MCF 10A (cell line): ENCODE measurements at regions of chr1 and their contacts with region 1.

Region 1: GRCh38 chr1:193406901-193407300 is 220.5 kb upstream of the B3GALT2 start:
- DNase-seq: peak; percentile 75
- H3K4me3 Mint-ChIP-seq: no peak overlapping the region
- H3K27ac Mint-ChIP-seq: peak overlapping the region; percentile 17
- H3K4me1 Mint-ChIP-seq: peaks cover 10% of the 10 kb centered on the region
- H3K27me3 Mint-ChIP-seq: no peaks in the 10 kb centered on the region
- CTCF ChIP-seq: peak; percentile 68

Region 2: GRCh38 chr1:192958871-192959270 is 448.0 kb before region 1 on chr1:
- CTCF ChIA-PET with region 1: no interaction called
- POLR2A ChIA-PET with region 1: no interaction called
- intact Hi-C with region 1: no loop called
- DNase-seq: peak; percentile 30
- H3K4me3 Mint-ChIP-seq: no peak overlapping the region
- H3K27ac Mint-ChIP-seq: no peak overlapping the region
- H3K4me1 Mint-ChIP-seq: no peaks in the 10 kb centered on the region
- H3K27me3 Mint-ChIP-seq: no peaks in the 10 kb centered on the region
- CTCF ChIP-seq: no peak

Region 3: GRCh38 chr1:193183019-193183627 is 223.8 kb before region 1 on chr1:
- CTCF ChIA-PET with region 1: interaction called, 3 read pairs
- POLR2A ChIA-PET with region 1: no interaction called
- intact Hi-C with region 1: loop called (anchors 1 kb)
- DNase-seq: peak; percentile 77
- H3K4me3 Mint-ChIP-seq: no peak overlapping the region
- H3K27ac Mint-ChIP-seq: no peak overlapping the region
- H3K4me1 Mint-ChIP-seq: peaks cover 26% of the 10 kb centered on the region
- H3K27me3 Mint-ChIP-seq: no peaks in the 10 kb centered on the region
- CTCF ChIP-seq: peak; percentile 83

Region 4: DNA sequence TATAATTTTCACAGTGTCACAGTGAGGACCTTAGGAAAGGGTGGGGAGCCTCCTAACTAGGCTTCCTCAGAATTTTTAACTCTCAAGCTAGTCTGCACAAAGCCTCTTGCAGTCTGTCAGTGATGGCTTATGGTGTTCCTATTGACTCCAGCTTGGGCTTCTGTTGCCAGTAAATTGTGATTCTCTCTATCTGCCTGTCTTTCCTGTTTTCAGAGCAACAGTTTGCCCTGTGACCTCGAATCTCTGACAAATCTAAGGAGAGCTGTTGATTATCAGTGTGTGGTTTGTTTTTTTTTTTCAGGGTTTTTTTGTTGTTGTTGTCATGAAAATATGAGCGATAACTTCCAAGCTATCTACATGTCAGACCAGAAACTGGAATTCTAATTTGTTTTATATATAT is 202.7 kb after region 1 on chr1:
- CTCF ChIA-PET with region 1: no interaction called
- POLR2A ChIA-PET with region 1: no interaction called
- intact Hi-C with region 1: loop called (anchors 5 kb)
- DNase-seq: no peak
- H3K4me3 Mint-ChIP-seq: no peak overlapping the region
- H3K27ac Mint-ChIP-seq: no peak overlapping the region
- H3K4me1 Mint-ChIP-seq: no peaks in the 10 kb centered on the region
- H3K27me3 Mint-ChIP-seq: no peaks in the 10 kb centered on the region
- CTCF ChIP-seq: no peak

Region 5: GRCh38 chr1:193754732-193755427 is 348.0 kb after region 1 on chr1:
- CTCF ChIA-PET with region 1: no interaction called
- POLR2A ChIA-PET with region 1: no interaction called
- intact Hi-C with region 1: loop called (anchors 2 kb)
- DNase-seq: peak; percentile 24
- H3K4me3 Mint-ChIP-seq: no peak overlapping the region
- H3K27ac Mint-ChIP-seq: no peak overlapping the region
- H3K4me1 Mint-ChIP-seq: no peaks in the 10 kb centered on the region
- H3K27me3 Mint-ChIP-seq: no peaks in the 10 kb centered on the region
- CTCF ChIP-seq: no peak